ENCODE measurements at regions of chr1 and their contacts with region 1.

Region 1: GRCh38 chr1:27603681-27604578 is at the start of gene AHDC1:
- DNase-seq: peak in 1 of 2 experiments; percentile 97
- H3K4me3 ChIP-seq: peak within 1 kb of the TSS; percentile 57 to 82 (median 68)
- H3K27ac ChIP-seq: no peak within 1 kb of the TSS
- H3K4me1 ChIP-seq: peaks cover 30 to 53% (median 40%) of the 10 kb centered on the region in 4 experiments
- H3K27me3 ChIP-seq: no peaks in the 10 kb centered on the region
- CTCF ChIP-seq: no peak; a peak in 1 of 4 replicates
- EP300 ChIP-seq: no peak
- POLR2A ChIP-seq: peak in 1 of 2 experiments; percentile 68; a peak in 2 of 3 replicates
- RAD21 ChIP-seq: no peak; a peak in 1 of 4 replicates
- total RNA-seq, gene AHDC1: 35.1 and 39.4 TPM in 2 replicates

Region 2: DNA sequence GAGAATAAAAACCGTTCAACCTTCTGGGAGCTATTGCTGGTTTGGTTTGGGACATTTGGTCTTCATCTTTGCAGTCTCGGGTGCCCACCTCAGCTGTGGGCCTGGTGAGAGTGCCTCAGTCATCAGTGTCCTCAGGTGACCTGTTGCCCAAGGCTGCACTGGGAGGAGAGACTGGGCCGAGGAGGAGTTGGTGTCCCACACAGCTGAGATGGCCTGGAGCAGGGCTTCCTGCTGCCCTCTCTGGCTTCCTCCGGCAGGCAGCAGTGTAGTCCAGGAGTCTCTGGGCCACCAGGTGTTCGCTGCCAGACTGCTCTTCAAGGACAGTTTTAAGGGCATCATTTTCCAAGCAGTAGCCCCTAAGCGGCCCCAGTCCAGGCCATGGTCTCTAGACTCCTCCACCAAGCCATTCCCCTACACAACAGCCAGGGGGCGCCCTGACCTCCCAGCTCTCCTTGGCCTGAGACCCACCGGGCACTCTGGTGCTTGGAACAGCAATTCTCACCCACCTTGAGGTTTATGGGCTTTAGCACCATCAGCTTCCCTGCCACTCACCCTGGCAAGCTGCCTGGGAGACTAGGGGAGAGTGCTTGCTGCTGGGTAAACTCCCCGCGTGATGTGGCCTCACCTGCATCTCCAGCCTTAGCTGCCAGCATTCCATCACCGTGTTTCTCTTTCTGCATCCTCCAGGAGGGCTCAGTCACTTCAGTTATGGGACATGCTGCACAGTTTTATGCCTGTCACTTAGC is 271.2 kb before region 1 on chr1:
- CTCF ChIA-PET with region 1: interaction called, 12 read pairs
- POLR2A ChIA-PET with region 1: no interaction called
- DNase-seq: peak in 1 of 2 experiments; percentile 86
- H3K4me3 ChIP-seq: no peak overlapping the region
- H3K27ac ChIP-seq: no peak overlapping the region
- H3K4me1 ChIP-seq: no peaks in the 10 kb centered on the region
- H3K27me3 ChIP-seq: no peaks in the 10 kb centered on the region
- CTCF ChIP-seq: peak; percentile 89 to 97 (median 95)
- EP300 ChIP-seq: no peak
- POLR2A ChIP-seq: no peak
- RAD21 ChIP-seq: peak; percentile 64 to 75

Region 3: GRCh38 chr1:27402349-27402754 is 201.6 kb before region 1 on chr1:
- CTCF ChIA-PET with region 1: interaction called, 105 read pairs
- POLR2A ChIA-PET with region 1: interaction called, 6 read pairs
- DNase-seq: peak in 1 of 2 experiments; percentile 76
- H3K4me3 ChIP-seq: no peak overlapping the region
- H3K27ac ChIP-seq: peak overlapping the region; percentile 1; the same call in 1 of the 2 replicates
- H3K4me1 ChIP-seq: peaks cover 13 to 48% (median 22%) of the 10 kb centered on the region in 4 experiments
- H3K27me3 ChIP-seq: no peaks in the 10 kb centered on the region
- CTCF ChIP-seq: peak; percentile 63 to 85 (median 84)
- EP300 ChIP-seq: no peak
- POLR2A ChIP-seq: 0 out of 3 replicates have a peak, but pooled peaks of 1 of the 2 experiments have one; percentile 46
- RAD21 ChIP-seq: peak; percentile 62 to 69

Region 4: GRCh38 chr1:27446496-27447020 is 157.4 kb before region 1 on chr1:
- CTCF ChIA-PET with region 1: no interaction called
- POLR2A ChIA-PET with region 1: no interaction called
- DNase-seq: no peak
- H3K4me3 ChIP-seq: no peak overlapping the region
- H3K27ac ChIP-seq: no peak overlapping the region
- H3K4me1 ChIP-seq: peaks cover 0 to 3% (median 0%) of the 10 kb centered on the region in 4 experiments; a peak in 1 of 7 replicates
- H3K27me3 ChIP-seq: no peaks in the 10 kb centered on the region
- CTCF ChIP-seq: no peak
- EP300 ChIP-seq: no peak
- POLR2A ChIP-seq: no peak
- RAD21 ChIP-seq: no peak

Region 5: DNA sequence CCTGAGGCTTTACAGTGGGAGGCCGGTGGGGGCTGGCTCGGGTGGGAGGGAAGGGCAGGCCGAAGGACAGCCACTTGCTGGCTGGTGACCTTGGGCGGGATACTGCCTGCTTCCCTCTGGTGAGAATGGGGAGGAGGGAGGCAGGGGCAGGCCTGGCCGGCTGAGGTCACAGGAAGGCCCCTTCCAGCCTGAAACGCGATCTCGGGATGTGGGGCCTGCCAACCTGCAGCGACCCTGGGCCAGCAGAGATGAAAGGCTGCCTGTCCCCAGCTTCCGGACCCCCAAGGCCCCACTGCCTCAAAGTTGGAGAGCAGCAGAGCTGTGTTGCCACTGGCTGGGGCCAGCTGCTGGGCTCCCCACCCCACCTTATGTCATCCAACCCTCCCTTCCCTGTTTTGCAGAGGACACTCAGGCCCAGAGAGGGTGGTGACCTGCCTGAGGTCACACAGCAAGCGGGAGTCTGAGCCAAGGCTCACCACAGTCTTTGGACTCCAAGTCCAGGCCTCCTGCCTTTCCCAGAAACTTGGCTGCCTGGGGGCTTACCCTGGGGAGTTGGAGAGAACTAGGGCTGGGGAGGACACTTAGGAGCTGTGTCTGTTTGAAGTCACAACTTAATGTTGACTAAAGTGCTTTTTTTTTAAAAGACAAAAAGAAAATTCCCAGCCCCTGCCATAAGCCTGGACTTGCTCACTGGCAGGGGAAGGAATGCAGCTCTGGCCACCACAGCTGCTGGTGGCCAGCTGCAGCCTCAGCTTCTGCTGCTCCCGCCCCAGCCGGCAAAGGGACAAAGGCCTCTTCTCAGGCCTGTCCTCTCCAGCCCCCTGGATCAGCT is 99.1 kb before region 1 on chr1:
- CTCF ChIA-PET with region 1: interaction called, 13 read pairs
- POLR2A ChIA-PET with region 1: interaction called, 3 read pairs
- DNase-seq: peak in 1 of 2 experiments; percentile 67
- H3K4me3 ChIP-seq: no peak overlapping the region
- H3K27ac ChIP-seq: no peak overlapping the region
- H3K4me1 ChIP-seq: peaks cover 0 to 14% (median 6%) of the 10 kb centered on the region in 4 experiments; a peak in 5 of 7 replicates
- H3K27me3 ChIP-seq: no peaks in the 10 kb centered on the region
- CTCF ChIP-seq: no peak
- EP300 ChIP-seq: no peak
- POLR2A ChIP-seq: no peak
- RAD21 ChIP-seq: no peak

Region 6: DNA sequence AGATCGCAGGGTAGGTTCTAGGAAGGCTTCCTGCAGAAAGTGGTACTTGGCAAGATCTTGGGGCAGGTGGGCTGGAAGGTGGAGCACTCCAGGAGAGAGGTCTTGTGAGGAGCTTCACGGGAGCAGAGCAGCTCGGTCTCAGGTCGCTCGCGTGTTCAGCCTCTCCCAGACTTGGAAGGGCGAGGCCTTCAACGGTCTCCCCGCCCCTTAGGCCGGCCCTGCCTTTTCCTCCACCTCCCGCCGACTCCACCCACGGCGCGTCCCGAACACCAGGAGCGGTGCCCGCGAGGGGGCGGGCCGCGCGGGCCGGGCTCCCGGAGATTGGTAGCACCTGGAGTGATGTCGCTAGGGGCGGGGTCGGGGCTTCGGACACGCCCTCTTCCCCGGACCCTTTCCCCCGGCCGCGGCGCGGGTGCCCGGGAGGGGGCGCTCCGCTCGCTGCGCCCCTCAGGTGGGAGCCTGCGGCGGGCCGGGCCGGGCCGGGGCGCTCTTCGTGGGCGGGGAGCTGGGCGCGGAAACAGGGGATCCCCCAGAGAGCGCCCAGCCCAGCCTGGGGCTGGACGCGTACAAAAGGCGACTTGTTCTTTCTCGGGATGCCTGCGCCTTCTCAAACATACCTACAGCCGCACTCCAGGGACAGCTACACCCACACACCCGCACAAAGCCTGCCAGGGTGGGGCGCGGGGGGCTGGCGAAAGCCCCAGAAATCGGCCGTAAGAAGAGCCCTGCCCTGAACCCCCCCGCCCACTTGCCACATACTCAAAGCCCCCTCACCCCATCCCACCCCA is 35.4 kb before region 1 on chr1:
- CTCF ChIA-PET with region 1: interaction called, 1,807 read pairs
- POLR2A ChIA-PET with region 1: interaction called, 355 read pairs
- DNase-seq: peak; percentile 80 to 97
- H3K4me3 ChIP-seq: peak overlapping the region in 3 of 4 experiments; percentile 1 to 43 (median 29); a peak in 6 of 8 replicates
- H3K27ac ChIP-seq: peak overlapping the region; percentile 1; the same call in 1 of the 2 replicates
- H3K4me1 ChIP-seq: peaks cover 37 to 77% (median 67%) of the 10 kb centered on the region in 4 experiments
- H3K27me3 ChIP-seq: no peaks in the 10 kb centered on the region
- CTCF ChIP-seq: peak in 2 of 3 experiments; percentile 73 to 91; a peak in 3 of 4 replicates
- EP300 ChIP-seq: no peak
- POLR2A ChIP-seq: no peak
- RAD21 ChIP-seq: peak; percentile 32 to 69

Region 7: GRCh38 chr1:27650539-27651175 is 46.7 kb after region 1 on chr1:
- CTCF ChIA-PET with region 1: interaction called, 47 read pairs
- POLR2A ChIA-PET with region 1: interaction called, 3 read pairs
- DNase-seq: no peak
- H3K4me3 ChIP-seq: no peak overlapping the region
- H3K27ac ChIP-seq: no peak overlapping the region
- H3K4me1 ChIP-seq: peaks cover 12 to 15% (median 14%) of the 10 kb centered on the region in 4 experiments
- H3K27me3 ChIP-seq: no peaks in the 10 kb centered on the region
- CTCF ChIP-seq: no peak
- EP300 ChIP-seq: no peak
- POLR2A ChIP-seq: no peak
- RAD21 ChIP-seq: no peak

Measured in H1 (cell line).